ENCODE measurements at regions of chr2 and their contacts with region 1.

Region 1: GRCh38 chr2:206159346-206160124 is at the starts of genes EEF1B2 and NDUFS1:
- DNase-seq: peak; percentile 97
- ATAC-seq: peak; percentile 86
- H3K4me3 ChIP-seq: peak within 1 kb of the TSS; percentile 70 to 97 (median 76)
- H3K4me3 Mint-ChIP-seq: peak within 1 kb of the TSS; percentile 90
- H3K27ac ChIP-seq: peak within 1 kb of the TSS; percentile 75 to 90
- H3K27ac Mint-ChIP-seq: peak within 1 kb of the TSS; percentile 93
- H3K4me1 ChIP-seq: peaks cover 17 to 23% of the 10 kb centered on the region in 2 donors
- H3K4me1 Mint-ChIP-seq: peaks cover 44% of the 10 kb centered on the region
- H3K27me3 ChIP-seq: no peaks in the 10 kb centered on the region
- H3K27me3 Mint-ChIP-seq: no peaks in the 10 kb centered on the region
- CTCF ChIP-seq: no peak
- total RNA-seq, gene EEF1B2: 813 and 862 TPM in 2 replicates
- total RNA-seq, gene NDUFS1: 42.4 and 46.3 TPM in 2 replicates

Region 2: GRCh38 chr2:206249714-206250591 is 90.4 kb after region 1 on chr2:
- CTCF ChIA-PET with region 1: no interaction called
- POLR2A ChIA-PET with region 1: no interaction called
- intact Hi-C with region 1: loop called (anchors 2 kb)
- DNase-seq: peak; percentile 38
- ATAC-seq: no peak
- H3K4me3 ChIP-seq: peak overlapping the region; percentile 16 to 43 (median 39)
- H3K4me3 Mint-ChIP-seq: peak overlapping the region; percentile 85
- H3K27ac ChIP-seq: no peak overlapping the region
- H3K27ac Mint-ChIP-seq: peak overlapping the region; percentile 5
- H3K4me1 ChIP-seq: peaks cover 12 to 30% of the 10 kb centered on the region in 2 donors
- H3K4me1 Mint-ChIP-seq: peaks cover 26% of the 10 kb centered on the region
- H3K27me3 ChIP-seq: peaks cover 0 to 37% (median 26%) of the 10 kb centered on the region in 4 experiments
- H3K27me3 Mint-ChIP-seq: peaks cover 38% of the 10 kb centered on the region
- CTCF ChIP-seq: no peak

Region 3: GRCh38 chr2:206274434-206275268 is 115.1 kb after region 1 on chr2 and contains the start of gene ZDBF2:
- CTCF ChIA-PET with region 1: no interaction called
- POLR2A ChIA-PET with region 1: interaction called, 7 read pairs
- intact Hi-C with region 1: loop called (anchors 1 kb)
- DNase-seq: peak; percentile 76
- ATAC-seq: peak; percentile 83
- H3K4me3 ChIP-seq: peak within 1 kb of the TSS; percentile 66 to 70 (median 67)
- H3K4me3 Mint-ChIP-seq: peak within 1 kb of the TSS; percentile 77
- H3K27ac ChIP-seq: peak within 1 kb of the TSS; percentile 39 to 78
- H3K27ac Mint-ChIP-seq: peak within 1 kb of the TSS; percentile 79
- H3K4me1 ChIP-seq: peaks cover 19 to 22% of the 10 kb centered on the region in 2 donors
- H3K4me1 Mint-ChIP-seq: peaks cover 18% of the 10 kb centered on the region
- H3K27me3 ChIP-seq: peaks cover 0 to 55% (median 24%) of the 10 kb centered on the region in 4 experiments
- H3K27me3 Mint-ChIP-seq: peaks cover 50% of the 10 kb centered on the region
- CTCF ChIP-seq: no peak
- total RNA-seq, gene ZDBF2: 16.5 and 18.7 TPM in 2 replicates

Region 4: GRCh38 chr2:206556357-206556949 is 396.9 kb after region 1 on chr2:
- CTCF ChIA-PET with region 1: interaction called, 3 read pairs
- POLR2A ChIA-PET with region 1: no interaction called
- intact Hi-C with region 1: loop called (anchors 2 kb)
- DNase-seq: peak; percentile 10
- ATAC-seq: no peak
- H3K4me3 ChIP-seq: no peak overlapping the region
- H3K4me3 Mint-ChIP-seq: no peak overlapping the region
- H3K27ac ChIP-seq: no peak overlapping the region
- H3K27ac Mint-ChIP-seq: no peak overlapping the region
- H3K4me1 ChIP-seq: no peaks in the 10 kb centered on the region
- H3K4me1 Mint-ChIP-seq: no peaks in the 10 kb centered on the region
- H3K27me3 ChIP-seq: no peaks in the 10 kb centered on the region
- H3K27me3 Mint-ChIP-seq: no peaks in the 10 kb centered on the region
- CTCF ChIP-seq: peak; percentile 64

Region 5: DNA sequence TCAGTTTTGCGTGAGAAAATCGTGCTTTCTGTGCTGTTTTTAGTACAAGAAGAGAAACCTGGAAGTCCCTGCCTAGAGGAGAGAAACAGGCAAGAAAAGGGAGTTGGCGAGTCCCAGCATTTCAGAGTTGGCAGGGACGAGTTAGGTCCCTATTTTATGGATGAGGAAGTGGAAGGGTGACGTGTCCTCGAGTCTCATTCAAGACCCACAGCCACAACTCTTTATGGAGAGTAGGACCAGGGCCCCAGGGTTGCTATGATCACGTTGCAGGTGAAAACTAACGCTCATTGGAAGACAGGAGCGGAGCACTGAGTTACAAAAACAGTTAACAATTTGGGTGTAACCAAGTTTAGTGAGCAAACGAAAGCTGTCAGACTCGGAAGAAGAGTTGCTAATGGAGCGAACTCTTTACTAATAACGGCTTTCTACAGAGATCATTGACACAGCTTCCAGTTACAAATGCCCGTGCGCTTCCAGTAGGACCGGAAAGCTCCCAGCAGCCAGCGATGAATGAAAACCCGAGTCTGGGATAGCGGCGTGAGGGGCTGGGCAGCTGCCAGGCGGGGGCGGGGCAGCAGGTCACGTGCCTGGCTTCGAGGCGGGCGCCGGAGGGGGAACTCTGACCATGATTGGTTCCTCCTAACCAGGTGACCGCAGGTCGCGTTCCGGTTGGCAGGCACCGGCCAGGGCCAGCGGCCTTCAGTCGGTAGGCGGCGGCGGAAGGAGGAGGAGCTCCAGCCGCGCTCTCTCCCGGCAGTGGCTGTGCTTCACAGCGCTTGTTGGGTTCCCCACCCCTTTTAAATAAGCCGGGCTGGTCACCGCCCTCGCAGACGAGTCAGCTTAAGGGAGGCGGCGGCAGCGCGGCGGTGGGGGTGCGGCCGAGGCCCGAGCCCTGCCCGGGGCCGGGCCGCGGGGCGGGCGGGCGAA is 1551.5 kb after region 1 on chr2 and contains the start of gene CCNYL1:
- CTCF ChIA-PET with region 1: no interaction called
- POLR2A ChIA-PET with region 1: no interaction called
- intact Hi-C with region 1: loop called (anchors 5 kb)
- DNase-seq: peak; percentile 99
- ATAC-seq: peak; percentile 94
- H3K4me3 ChIP-seq: peak within 1 kb of the TSS; percentile 81 to 98 (median 93)
- H3K4me3 Mint-ChIP-seq: peak within 1 kb of the TSS; percentile 91
- H3K27ac ChIP-seq: peak within 1 kb of the TSS; percentile 78 to 83
- H3K27ac Mint-ChIP-seq: peak within 1 kb of the TSS; percentile 88
- H3K4me1 ChIP-seq: peaks cover 17 to 19% of the 10 kb centered on the region in 2 donors
- H3K4me1 Mint-ChIP-seq: peaks cover 23% of the 10 kb centered on the region
- H3K27me3 ChIP-seq: no peaks in the 10 kb centered on the region
- H3K27me3 Mint-ChIP-seq: no peaks in the 10 kb centered on the region
- CTCF ChIP-seq: no peak
- total RNA-seq, gene CCNYL1: 14.2 and 15.1 TPM in 2 replicates

Measured in B cell (primary cell).